Activated naive CD4-positive, alpha-beta T cell treated with anti-CD3 and anti-CD28 coated beads for 36 hours (primary cell): ENCODE measurements at regions of chr9 and their contacts with region 1.

Region 1: DNA sequence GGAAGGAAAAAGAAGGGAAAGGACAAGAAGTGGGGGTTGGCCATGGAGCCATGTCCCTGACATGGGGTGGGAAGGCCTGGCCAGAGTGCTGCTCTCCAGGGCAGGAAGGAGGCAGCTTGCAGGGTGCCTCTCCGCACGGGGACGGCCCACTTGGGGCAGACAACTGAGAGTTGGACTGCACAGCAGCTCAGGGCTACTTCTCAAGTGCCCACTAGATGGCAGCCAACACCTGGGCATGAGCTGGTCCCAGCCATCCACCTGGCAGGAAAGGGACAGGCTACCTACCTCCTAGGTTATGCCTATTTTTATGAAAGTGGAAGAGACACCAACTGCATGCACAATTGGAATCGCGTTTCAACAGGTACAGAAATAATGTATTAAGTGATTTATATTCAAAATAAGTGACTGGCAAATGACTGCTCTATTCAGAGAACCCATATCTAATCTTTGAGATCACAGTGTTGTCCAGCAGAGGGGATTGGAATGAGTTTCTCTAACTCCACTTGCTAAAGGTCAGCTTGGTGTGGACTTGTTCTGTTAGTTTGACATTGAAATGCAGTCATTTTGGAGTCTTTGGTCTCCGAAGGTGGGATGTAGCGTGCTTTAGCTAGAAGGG is 113.4 kb downstream of the SYK start:
- DNase-seq: peak; percentile 82
- H3K4me3 Mint-ChIP-seq: no peak overlapping the region
- H3K27ac Mint-ChIP-seq: no peak overlapping the region
- H3K4me1 Mint-ChIP-seq: no peaks in the 10 kb centered on the region
- H3K27me3 Mint-ChIP-seq: no peaks in the 10 kb centered on the region

Region 2: DNA sequence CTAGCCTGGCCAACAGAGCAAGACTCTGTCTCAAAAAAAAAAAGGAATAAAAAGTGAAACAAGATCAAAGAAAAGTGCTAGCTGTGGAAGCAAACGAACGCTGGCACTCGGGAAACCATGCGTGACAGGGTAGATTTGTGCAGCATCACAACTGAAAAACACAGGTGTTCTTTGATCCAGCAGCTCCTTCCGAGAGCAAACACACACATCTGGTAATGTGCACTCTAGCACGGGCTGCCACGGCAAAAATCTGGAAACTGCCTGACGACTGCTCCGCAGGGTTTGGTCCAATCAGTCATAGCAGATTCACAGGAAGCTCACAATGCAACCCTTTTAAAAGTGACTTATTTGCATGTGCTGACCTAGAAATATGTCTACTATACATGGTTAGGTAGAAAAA is 33.3 kb before region 1 on chr9:
- CTCF ChIA-PET with region 1: no interaction called
- intact Hi-C with region 1: no loop called
- DNase-seq: no peak
- H3K4me3 Mint-ChIP-seq: no peak overlapping the region
- H3K27ac Mint-ChIP-seq: no peak overlapping the region
- H3K4me1 Mint-ChIP-seq: no peaks in the 10 kb centered on the region
- H3K27me3 Mint-ChIP-seq: no peaks in the 10 kb centered on the region

Region 3: DNA sequence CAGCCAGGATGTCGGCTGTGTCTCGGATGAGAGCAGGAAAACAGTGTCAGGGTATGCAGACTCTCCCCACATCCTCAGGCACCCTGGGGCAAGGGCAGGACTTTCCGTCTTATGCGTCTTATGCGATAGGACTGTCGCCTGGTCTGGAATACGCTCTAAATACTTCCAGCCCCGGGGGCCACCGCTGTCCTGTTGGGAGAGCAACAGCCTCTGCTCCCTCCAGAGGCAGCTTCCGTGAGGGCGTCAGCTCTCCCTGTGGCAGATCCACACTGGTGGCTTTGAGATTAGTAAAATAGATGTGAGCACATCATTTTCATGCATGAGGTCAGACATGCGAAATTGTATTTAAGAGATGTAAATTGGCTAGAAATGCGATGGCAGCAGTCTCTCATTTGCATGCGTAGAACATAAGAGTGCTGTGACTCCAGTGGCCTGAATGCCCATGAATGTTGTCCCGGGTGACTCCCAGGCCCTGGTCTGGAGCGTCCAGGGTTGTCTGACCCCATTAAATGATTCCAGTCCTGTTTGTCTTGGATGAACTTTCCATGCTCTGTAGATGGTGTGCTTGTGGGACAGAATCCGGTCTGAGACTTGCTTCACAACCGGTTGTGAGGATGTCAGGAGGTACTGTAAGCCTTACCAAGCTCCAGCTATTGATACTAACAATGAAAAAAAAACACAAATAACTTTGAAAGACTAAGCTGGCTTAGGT is 114.8 kb after region 1 on chr9:
- CTCF ChIA-PET with region 1: interaction called, 17 read pairs
- intact Hi-C with region 1: loop called (anchors 1 kb)
- DNase-seq: no peak
- H3K4me3 Mint-ChIP-seq: no peak overlapping the region
- H3K27ac Mint-ChIP-seq: no peak overlapping the region
- H3K4me1 Mint-ChIP-seq: no peaks in the 10 kb centered on the region
- H3K27me3 Mint-ChIP-seq: peaks cover 6% of the 10 kb centered on the region

Region 4: GRCh38 chr9:91433180-91433579 is 518.2 kb after region 1 on chr9:
- CTCF ChIA-PET with region 1: interaction called, 71 read pairs
- intact Hi-C with region 1: loop called (anchors 1 kb)
- DNase-seq: peak; percentile 34
- H3K4me3 Mint-ChIP-seq: no peak overlapping the region
- H3K27ac Mint-ChIP-seq: no peak overlapping the region
- H3K4me1 Mint-ChIP-seq: peaks cover 3% of the 10 kb centered on the region
- H3K27me3 Mint-ChIP-seq: peaks cover 12% of the 10 kb centered on the region

Region 5: DNA sequence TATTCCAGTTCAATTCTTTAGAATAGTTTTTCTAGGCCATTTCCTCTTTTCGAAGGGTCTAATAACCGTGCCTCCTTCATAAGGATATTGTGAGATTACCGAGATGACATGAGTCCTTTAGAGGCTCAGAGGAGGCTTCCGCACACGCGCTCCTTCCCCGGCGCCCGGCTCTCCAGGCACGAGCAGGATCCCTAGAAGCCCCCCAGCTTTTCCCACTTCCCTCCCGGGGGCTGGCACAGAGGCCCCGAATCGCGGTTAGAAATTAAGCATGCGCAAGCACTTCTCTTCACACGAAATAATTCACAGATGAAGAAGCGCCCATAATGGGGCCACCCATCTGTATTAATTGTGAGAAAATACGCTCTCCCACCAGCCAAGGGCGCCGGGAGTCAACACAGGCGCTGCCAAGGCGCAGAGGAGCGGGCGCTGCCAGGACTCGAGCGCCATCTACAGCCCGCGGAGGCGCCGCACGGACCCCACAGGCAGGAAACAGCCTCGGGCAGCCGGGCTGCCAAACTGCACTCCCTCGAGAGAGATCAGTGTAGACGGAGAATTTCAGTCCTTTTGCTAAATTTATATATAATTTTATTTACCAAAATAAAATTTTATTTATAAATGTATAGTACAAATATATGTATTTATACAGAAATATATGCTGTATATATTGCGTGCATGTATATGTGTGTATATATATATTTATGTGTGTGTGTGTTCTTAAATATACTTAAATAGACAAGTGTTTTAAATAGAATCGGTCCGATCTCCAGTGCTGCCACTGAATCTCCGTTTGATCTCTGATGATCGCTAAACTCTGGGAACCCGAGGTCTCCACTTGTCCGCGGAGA is 766.7 kb after region 1 on chr9:
- CTCF ChIA-PET with region 1: interaction called, 6 read pairs
- intact Hi-C with region 1: loop called (anchors 1 kb)
- DNase-seq: peak; percentile 82
- H3K4me3 Mint-ChIP-seq: no peak overlapping the region
- H3K27ac Mint-ChIP-seq: no peak overlapping the region
- H3K4me1 Mint-ChIP-seq: peaks cover 4% of the 10 kb centered on the region
- H3K27me3 Mint-ChIP-seq: peaks cover 32% of the 10 kb centered on the region

Region 6: DNA sequence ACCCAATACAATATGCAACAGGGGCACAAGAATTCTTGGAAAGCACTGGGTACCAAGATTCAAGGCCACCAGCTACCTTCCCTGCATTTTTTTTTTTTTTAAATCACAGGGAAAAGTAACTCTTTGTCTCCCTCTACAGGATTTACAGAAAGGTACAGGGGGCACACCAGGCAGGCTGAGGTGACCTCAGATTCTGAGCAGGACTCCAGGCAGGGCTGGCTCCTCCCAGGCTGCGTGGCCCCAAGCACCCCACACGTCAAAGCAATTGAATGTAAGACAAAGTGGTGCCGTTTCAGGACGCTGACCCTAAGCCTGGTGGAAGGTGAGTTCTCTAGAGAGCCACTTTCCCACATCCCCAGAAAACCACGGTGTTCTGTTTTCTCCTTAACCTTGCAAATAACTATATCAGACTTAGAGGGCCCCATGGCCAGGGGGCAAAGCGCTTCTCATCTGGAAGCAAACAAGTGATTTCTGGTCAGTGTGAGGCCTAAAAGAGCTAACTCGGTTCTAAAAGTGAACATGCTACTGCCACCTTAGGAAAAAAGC is 812.4 kb after region 1 on chr9:
- CTCF ChIA-PET with region 1: interaction called, 17 read pairs
- intact Hi-C with region 1: loop called (anchors 1 kb)
- DNase-seq: peak; percentile 49
- H3K4me3 Mint-ChIP-seq: no peak overlapping the region
- H3K27ac Mint-ChIP-seq: no peak overlapping the region
- H3K4me1 Mint-ChIP-seq: no peaks in the 10 kb centered on the region
- H3K27me3 Mint-ChIP-seq: peaks cover 2% of the 10 kb centered on the region